PC-9 (cell line): ENCODE measurements at regions of chrX and their contacts with region 1.

Region 1: DNA sequence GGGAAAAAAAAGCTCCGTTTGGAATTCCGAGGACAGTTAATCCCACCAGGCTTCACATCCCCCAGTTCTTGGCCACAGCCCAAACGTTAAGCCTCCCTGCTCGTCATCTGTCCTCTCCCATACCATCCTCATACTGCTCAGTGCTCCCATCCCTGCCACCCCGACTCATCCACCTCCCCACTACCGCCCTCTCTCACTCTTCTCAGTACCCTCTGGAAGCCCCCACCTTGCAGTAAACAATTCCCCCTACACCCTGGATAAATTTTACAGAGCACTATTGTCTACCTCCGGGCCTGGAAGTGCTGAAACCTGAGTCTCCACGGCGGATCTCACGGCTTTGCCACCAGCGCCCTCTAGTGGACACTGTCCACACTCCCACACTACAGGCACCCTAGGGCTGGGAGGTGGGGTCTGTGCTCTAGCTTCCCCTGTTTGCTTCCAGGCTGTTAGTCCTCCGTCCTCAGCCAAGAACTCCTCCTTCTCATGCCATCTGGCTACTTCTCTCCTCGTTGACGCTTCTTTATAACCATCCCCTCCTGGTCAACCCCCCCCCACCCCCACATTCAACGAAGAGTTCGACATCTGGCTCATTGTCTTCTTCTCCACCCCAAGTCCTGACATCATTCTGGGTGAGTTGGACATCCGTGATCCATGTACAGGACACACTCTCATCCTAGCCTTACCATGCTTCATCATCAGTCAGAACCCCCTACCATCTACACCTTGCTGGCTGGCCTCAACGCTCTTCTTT is 54.5 kb downstream of the RTL9 start:
- DNase-seq: peak; percentile 58 to 71
- H3K4me3 ChIP-seq: no peak overlapping the region
- H3K27ac ChIP-seq: no peak overlapping the region
- H3K4me1 ChIP-seq: peaks cover 20% of the 10 kb centered on the region
- H3K27me3 ChIP-seq: no peaks in the 10 kb centered on the region
- CTCF ChIP-seq: peak; percentile 94

Region 2: GRCh38 chrX:109911046-109911445 is 502.1 kb before region 1 on chrX:
- CTCF ChIA-PET with region 1: no interaction called
- POLR2A ChIA-PET with region 1: no interaction called
- intact Hi-C with region 1: loop called (anchors 5 kb)
- DNase-seq: no peak
- H3K4me3 ChIP-seq: no peak overlapping the region
- H3K27ac ChIP-seq: no peak overlapping the region
- H3K4me1 ChIP-seq: no peaks in the 10 kb centered on the region
- H3K27me3 ChIP-seq: no peaks in the 10 kb centered on the region
- CTCF ChIP-seq: peak; percentile 80

Region 3: DNA sequence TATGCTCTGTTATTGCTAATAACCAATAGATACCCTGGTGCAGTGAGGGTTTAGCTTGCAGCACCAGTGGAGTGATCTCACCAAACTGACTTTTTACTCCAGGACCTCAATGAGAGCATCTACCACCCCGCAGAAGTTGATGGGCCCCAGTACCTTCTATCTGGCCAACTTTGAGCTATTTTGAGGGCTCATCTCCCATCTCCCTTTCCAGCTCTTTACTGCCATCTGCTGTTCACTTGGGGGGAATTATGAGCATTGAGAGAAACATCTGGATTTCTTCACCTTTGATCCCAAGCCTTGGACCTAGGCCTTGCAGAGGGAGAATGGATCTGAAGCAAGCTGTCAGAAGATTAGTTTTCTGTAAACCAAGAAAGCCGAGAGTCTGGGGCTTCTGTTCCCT is 266.6 kb before region 1 on chrX:
- CTCF ChIA-PET with region 1: interaction called, 11 read pairs
- POLR2A ChIA-PET with region 1: no interaction called
- intact Hi-C with region 1: no loop called
- DNase-seq: peak in 1 of 2 experiments; percentile 32
- H3K4me3 ChIP-seq: no peak overlapping the region
- H3K27ac ChIP-seq: no peak overlapping the region
- H3K4me1 ChIP-seq: no peaks in the 10 kb centered on the region
- H3K27me3 ChIP-seq: no peaks in the 10 kb centered on the region
- CTCF ChIP-seq: peak; percentile 78

Region 4: GRCh38 chrX:110163488-110163887 is 249.7 kb before region 1 on chrX:
- CTCF ChIA-PET with region 1: interaction called, 12 read pairs
- POLR2A ChIA-PET with region 1: no interaction called
- intact Hi-C with region 1: loop called (anchors 1 kb)
- DNase-seq: peak in 1 of 2 experiments; percentile 80
- H3K4me3 ChIP-seq: no peak overlapping the region; the same call in 1 of the 2 replicates
- H3K27ac ChIP-seq: peak overlapping the region; percentile 75
- H3K4me1 ChIP-seq: peaks cover 49% of the 10 kb centered on the region
- H3K27me3 ChIP-seq: no peaks in the 10 kb centered on the region
- CTCF ChIP-seq: no peak

Region 5: DNA sequence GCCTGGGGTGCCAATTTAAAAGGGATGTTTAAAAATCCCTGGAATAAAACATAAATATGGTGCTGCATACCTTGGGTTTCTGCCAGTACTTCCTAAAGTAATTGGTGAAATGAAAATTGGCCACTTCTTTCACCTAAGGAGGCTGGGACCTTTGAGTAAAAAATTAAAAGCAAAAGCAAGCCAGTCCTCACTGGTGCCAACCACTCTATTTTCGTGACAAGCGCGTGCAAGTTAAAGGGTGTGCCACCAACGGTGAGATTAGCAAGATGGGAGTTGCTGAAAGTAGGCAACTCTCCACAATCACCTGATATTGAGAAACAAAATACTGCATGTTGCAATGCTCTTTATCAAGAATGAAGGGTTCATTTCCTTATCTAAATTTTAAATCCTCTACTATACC is 74.2 kb before region 1 on chrX:
- CTCF ChIA-PET with region 1: no interaction called
- POLR2A ChIA-PET with region 1: no interaction called
- intact Hi-C with region 1: no loop called
- DNase-seq: no peak
- H3K4me3 ChIP-seq: no peak overlapping the region
- H3K27ac ChIP-seq: no peak overlapping the region
- H3K4me1 ChIP-seq: peaks cover 18% of the 10 kb centered on the region
- H3K27me3 ChIP-seq: no peaks in the 10 kb centered on the region
- CTCF ChIP-seq: no peak

Region 6: GRCh38 chrX:110394671-110395070 is 18.5 kb before region 1 on chrX:
- CTCF ChIA-PET with region 1: interaction called, 11 read pairs
- POLR2A ChIA-PET with region 1: no interaction called
- intact Hi-C with region 1: no loop called
- DNase-seq: peak; percentile 66 to 94
- H3K4me3 ChIP-seq: no peak overlapping the region
- H3K27ac ChIP-seq: peak overlapping the region; percentile 77
- H3K4me1 ChIP-seq: peaks cover 51% of the 10 kb centered on the region
- H3K27me3 ChIP-seq: no peaks in the 10 kb centered on the region
- CTCF ChIP-seq: no peak